Sciatic nerve (tissue), 2 donors: ENCODE measurements at regions of chr7 and their contacts with region 1.

Region 1: GRCh38 chr7:123871998-123872867 is 27.3 kb downstream of the HYAL4 start:
- DNase-seq: no peak
- ATAC-seq: peak; percentile 80

Region 2: GRCh38 chr7:123157606-123158005 is 714.6 kb before region 1 on chr7:
- intact Hi-C with region 1: no loop called
- DNase-seq: no peak
- ATAC-seq: no peak

Region 3: GRCh38 chr7:123797673-123798527 is 74.3 kb before region 1 on chr7:
- intact Hi-C with region 1: loop called (anchors 10 kb)
- DNase-seq: no peak
- ATAC-seq: peak; percentile 93